ENCODE measurements at regions of chr5 and their contacts with region 1.

Region 1: GRCh38 chr5:91280362-91281269 is 102.5 kb downstream of the ARRDC3 start:
- DNase-seq: peak; percentile 94
- H3K4me3 ChIP-seq: peak overlapping the region; percentile 70
- H3K27ac ChIP-seq: peak overlapping the region; percentile 97
- H3K4me1 ChIP-seq: peaks cover 60% of the 10 kb centered on the region
- H3K27me3 ChIP-seq: no peaks in the 10 kb centered on the region
- CTCF ChIP-seq: 0 out of 2 replicates have a peak, but pooled peaks have one; percentile 22

Region 2: GRCh38 chr5:91151947-91152346 is 128.7 kb before region 1 on chr5:
- CTCF ChIA-PET with region 1: no interaction called
- POLR2A ChIA-PET with region 1: interaction called, 16 read pairs
- intact Hi-C with region 1: no loop called
- DNase-seq: peak; percentile 62 to 84
- H3K4me3 ChIP-seq: no peak overlapping the region
- H3K27ac ChIP-seq: no peak overlapping the region
- H3K4me1 ChIP-seq: peaks cover 25% of the 10 kb centered on the region
- H3K27me3 ChIP-seq: no peaks in the 10 kb centered on the region
- CTCF ChIP-seq: no peak

Region 3: DNA sequence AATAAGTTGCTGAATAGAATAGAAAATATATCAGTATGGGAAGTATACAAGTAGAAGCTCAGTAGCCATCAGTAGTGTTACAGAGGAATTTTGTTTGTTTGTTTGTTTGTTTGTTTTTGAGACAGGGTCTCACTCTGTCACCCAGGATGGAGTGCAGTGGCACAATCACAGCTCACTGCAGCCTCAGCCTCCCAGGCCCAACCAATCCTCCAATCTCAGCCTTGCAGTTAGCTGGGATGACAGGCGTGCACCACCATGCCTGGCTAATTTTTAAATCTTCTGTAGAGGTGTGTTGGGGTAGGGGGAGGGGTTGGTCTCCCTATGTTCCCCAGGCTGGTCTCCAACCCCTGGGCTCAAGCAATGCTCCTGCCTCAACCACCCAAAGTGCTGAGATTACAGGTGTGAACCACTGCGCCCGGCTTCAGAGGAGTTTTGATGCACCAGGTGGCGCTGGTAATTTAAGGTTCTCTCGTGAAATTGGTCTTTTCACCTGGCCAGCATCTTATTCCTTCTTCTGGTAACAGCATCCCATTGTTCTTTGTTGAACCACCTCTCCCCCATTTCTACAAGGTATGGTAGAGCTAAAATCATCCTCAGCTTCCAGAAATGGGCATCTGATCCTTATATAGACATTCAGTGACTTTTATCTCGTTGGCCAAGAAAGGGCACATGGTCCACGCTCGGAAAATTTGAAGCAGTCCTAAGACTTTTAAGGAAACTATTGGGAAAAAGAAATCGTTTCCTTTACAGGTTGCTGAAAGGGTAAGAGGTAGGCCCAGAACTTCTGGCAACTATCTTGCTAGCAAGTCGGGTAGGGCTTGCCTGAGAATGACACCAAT is 54.5 kb before region 1 on chr5:
- CTCF ChIA-PET with region 1: no interaction called
- POLR2A ChIA-PET with region 1: no interaction called
- intact Hi-C with region 1: loop called (anchors 5 kb)
- DNase-seq: peak in 1 of 2 experiments; percentile 46
- H3K4me3 ChIP-seq: no peak overlapping the region
- H3K27ac ChIP-seq: no peak overlapping the region
- H3K4me1 ChIP-seq: no peaks in the 10 kb centered on the region
- H3K27me3 ChIP-seq: no peaks in the 10 kb centered on the region
- CTCF ChIP-seq: peak; percentile 65

Region 4: DNA sequence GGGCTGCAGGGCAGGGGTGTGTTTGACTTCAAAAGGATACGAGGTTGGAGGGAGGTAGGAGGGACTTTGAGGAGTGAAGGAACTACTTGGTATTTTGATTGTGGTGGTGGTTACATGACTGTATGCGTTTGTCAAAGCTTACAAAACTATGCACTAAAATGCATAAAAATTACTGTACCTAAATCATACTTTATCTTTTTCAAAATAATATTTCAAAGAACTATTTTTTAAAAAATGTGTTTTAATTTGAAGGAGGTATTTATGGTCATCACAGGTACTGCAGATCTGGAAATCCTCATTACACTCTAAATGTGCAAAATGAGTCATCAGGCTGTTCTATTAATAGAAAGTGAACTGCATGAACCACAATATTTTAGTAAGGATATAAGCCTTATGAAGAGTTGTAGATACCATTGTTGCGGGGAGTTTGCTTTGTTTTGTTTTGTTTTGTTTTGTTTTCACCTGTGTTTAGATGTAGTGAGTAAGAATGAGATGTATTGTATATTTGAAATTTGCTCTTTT is 14.4 kb before region 1 on chr5:
- CTCF ChIA-PET with region 1: interaction called, 9 read pairs
- POLR2A ChIA-PET with region 1: interaction called, 21 read pairs
- intact Hi-C with region 1: no loop called
- DNase-seq: peak in 1 of 2 experiments; percentile 76
- H3K4me3 ChIP-seq: no peak overlapping the region
- H3K27ac ChIP-seq: 0 out of 2 replicates have a peak overlapping the region, but pooled peaks have one; percentile 4
- H3K4me1 ChIP-seq: peaks cover 14% of the 10 kb centered on the region
- H3K27me3 ChIP-seq: no peaks in the 10 kb centered on the region
- CTCF ChIP-seq: peak; percentile 43; the same call in 1 of the 2 replicates

Region 5: DNA sequence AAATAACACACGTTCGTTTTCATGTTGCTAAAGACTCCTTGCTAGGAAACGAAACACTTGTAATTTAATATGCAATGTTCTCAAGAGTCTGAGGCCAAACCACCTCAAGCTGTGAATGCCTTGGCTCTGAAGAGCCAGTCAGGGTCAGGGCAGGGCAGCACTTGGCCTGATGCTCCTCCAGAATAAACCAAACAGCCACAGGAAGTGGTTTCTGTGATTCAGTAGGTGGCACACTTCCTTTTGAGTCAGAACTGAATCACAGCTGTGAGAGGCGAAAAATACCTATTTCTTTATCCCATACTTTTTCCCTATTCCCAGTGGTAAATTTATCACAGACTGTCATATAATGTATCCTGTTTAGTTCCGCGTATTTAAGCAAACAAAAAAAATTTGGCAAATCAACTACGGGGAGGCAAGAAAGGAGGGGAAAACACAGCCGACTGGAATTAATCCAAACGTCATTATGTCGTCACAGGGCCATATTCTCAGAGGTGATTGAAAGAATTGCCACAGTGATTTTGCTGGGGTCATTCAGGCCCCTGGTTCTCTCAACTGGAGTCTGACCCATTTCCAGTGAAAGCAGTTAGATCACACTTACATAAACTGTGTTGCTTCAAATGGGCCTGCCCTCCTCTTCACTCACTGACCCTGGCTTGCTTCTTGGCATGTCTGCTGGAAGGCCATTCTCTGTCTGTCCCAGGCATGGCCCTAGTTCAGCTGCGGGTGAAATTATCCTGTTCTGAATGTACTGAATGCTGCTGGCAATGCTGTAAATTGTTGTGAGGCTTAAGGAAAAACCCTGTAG is 31.3 kb after region 1 on chr5:
- CTCF ChIA-PET with region 1: no interaction called
- POLR2A ChIA-PET with region 1: interaction called, 8 read pairs
- intact Hi-C with region 1: loop called (anchors 1 kb)
- DNase-seq: peak; percentile 78 to 98
- H3K4me3 ChIP-seq: peak overlapping the region; percentile 82
- H3K27ac ChIP-seq: peak overlapping the region; percentile 99
- H3K4me1 ChIP-seq: peaks cover 38% of the 10 kb centered on the region
- H3K27me3 ChIP-seq: no peaks in the 10 kb centered on the region
- CTCF ChIP-seq: no peak; the same call in 1 of the 2 replicates

Measured in PC-9 (cell line).